Activated CD4-positive, alpha-beta T cell treated with anti-CD3 and anti-CD28 coated beads, Interleukin-2, amount 10 ng/mL, durations not matched to agents 24 days and 14 days (primary cell): ENCODE measurements at regions of chr1 and their contacts with region 1.

Region 1: GRCh38 chr1:69752831-69753230 is 185.1 kb downstream of the LRRC7 start:
- DNase-seq: no peak
- H3K4me3 Mint-ChIP-seq: no peak overlapping the region
- H3K27ac Mint-ChIP-seq: no peak overlapping the region
- H3K4me1 Mint-ChIP-seq: no peaks in the 10 kb centered on the region
- H3K27me3 Mint-ChIP-seq: no peaks in the 10 kb centered on the region

Region 2: DNA sequence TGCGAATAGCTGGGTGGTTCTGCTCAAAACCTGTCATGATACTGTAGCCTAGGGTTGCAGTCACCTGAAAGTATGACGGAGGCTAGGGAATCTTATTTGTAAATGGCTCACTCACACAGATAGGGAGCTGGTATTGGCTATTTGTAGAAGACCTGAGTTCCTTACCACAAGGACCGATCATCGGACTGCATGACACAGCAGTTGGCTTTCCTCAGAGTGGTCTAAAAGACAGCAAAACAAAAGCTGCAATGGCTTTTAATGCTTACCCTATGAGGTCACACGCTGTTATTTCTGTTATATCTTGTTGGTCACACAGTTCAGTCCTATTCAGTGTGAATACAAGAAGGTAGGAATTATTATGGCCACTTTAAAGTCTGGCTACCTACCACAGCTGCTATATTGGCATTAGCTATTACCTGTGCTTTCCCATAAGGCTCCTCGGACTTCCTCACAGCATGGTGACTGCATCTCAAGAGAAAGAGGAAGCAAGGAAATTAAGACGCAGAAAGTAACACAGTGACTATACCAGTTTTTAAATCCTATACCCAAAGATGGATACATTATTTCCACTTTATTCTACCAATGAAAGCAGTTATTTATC is 253.5 kb before region 1 on chr1:
- intact Hi-C with region 1: no loop called
- DNase-seq: no peak
- H3K4me3 Mint-ChIP-seq: no peak overlapping the region
- H3K27ac Mint-ChIP-seq: no peak overlapping the region
- H3K4me1 Mint-ChIP-seq: no peaks in the 10 kb centered on the region
- H3K27me3 Mint-ChIP-seq: no peaks in the 10 kb centered on the region

Region 3: DNA sequence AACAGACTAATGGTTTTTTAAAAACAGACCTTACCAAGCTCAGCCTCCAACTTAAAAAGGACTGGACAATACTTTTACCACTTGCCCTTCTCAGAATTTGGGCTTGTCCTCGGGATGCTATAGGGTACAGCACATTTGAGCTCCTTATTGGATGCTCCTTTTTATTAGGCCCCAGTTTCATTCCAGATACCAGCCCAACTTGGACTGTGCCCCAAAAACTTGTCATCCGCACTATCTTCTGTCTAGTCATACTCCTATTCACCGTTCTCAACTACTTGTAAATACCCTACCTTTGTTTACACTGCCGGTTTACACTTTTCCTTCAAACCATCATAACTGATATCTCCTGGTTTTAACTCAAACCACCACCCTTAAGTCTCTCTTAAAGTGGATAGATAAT is 619.6 kb after region 1 on chr1:
- intact Hi-C with region 1: loop called (anchors 5 kb)
- DNase-seq: no peak
- H3K4me3 Mint-ChIP-seq: no peak overlapping the region
- H3K27ac Mint-ChIP-seq: no peak overlapping the region
- H3K4me1 Mint-ChIP-seq: no peaks in the 10 kb centered on the region
- H3K27me3 Mint-ChIP-seq: no peaks in the 10 kb centered on the region